Activated CD4-positive, alpha-beta T cell treated with anti-CD3 and anti-CD28 coated beads for 36 hours (primary cell): ENCODE measurements at regions of chr1 and their contacts with region 1.

Region 1: GRCh38 chr1:75724472-75725022 is at the start of gene ACADM:
- DNase-seq: peak; percentile 91
- ATAC-seq: peak; percentile 94
- H3K4me3 Mint-ChIP-seq: peak within 1 kb of the TSS; percentile 98
- H3K27ac Mint-ChIP-seq: peak within 1 kb of the TSS; percentile 98
- H3K4me1 Mint-ChIP-seq: peaks cover 40% of the 10 kb centered on the region
- H3K27me3 Mint-ChIP-seq: no peaks in the 10 kb centered on the region
- total RNA-seq, gene ACADM: 47.2 to 51.8 TPM

Region 2: DNA sequence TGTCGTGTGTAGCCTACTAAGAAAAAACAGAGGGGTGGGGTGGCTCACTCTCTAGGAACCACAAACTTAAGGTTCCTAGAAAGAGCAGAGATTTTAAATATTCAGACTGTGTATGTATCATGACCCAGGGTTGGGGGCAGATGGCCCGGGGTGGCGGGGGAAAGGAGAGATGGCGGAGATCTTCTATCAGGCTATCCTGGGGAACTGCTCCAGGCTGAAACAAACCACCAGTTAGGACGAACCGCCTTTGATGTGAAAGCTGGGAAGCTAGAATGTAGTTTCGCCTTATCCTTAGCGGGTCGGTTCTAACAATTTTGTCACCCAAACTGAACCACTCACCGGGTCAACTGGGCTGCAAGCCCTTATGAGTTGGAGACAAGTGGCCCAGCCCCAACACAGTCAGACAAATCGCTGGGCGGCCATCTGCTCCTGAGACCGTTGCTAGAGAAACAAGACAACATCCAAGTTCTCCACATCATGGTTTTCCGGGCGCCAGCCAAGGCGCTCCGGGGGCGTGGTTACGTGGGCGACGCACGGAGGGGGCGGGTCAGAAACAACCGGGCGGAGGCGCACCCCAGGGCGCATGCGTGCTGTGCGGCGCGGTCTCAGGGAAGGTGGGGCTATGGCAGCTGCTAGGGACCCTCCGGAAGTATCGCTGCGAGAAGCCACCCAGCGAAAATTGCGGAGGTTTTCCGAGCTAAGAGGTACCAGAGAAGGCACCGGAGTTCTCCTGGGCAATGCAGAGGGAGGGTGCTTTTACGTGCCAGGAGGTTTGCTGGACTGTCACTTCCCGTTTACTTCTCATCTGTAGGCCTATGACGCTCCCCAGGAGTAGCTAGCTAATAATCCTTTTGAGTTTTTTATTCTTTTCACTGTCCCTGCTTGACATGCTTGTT is 1526.6 kb before region 1 on chr1 and contains the starts of genes FPGT and LRRIQ3:
- CTCF ChIA-PET with region 1: no interaction called
- POLR2A ChIA-PET with region 1: no interaction called
- intact Hi-C with region 1: loop called in 1 of 2 experiments (anchors 1 kb)
- DNase-seq: peak; percentile 97
- ATAC-seq: peak; percentile 96
- H3K4me3 Mint-ChIP-seq: peak within 1 kb of the TSS; percentile 85
- H3K27ac Mint-ChIP-seq: peak within 1 kb of the TSS; percentile 95
- H3K4me1 Mint-ChIP-seq: peaks cover 15% of the 10 kb centered on the region
- H3K27me3 Mint-ChIP-seq: no peaks in the 10 kb centered on the region
- total RNA-seq, gene FPGT: 12.5 to 13.9 TPM
- total RNA-seq, gene LRRIQ3: 1.9 to 2.7 TPM

Region 3: GRCh38 chr1:74771913-74772515 is 952.5 kb before region 1 on chr1:
- CTCF ChIA-PET with region 1: no interaction called
- POLR2A ChIA-PET with region 1: no interaction called
- intact Hi-C with region 1: loop called in 1 of 2 experiments (anchors 10 kb)
- DNase-seq: peak; percentile 27
- ATAC-seq: no peak
- H3K4me3 Mint-ChIP-seq: no peak overlapping the region
- H3K27ac Mint-ChIP-seq: no peak overlapping the region
- H3K4me1 Mint-ChIP-seq: no peaks in the 10 kb centered on the region
- H3K27me3 Mint-ChIP-seq: peaks cover 9% of the 10 kb centered on the region

Region 4: GRCh38 chr1:76074321-76075187 is 350.0 kb after region 1 on chr1 and contains the start of gene ST6GALNAC3:
- CTCF ChIA-PET with region 1: no interaction called
- POLR2A ChIA-PET with region 1: no interaction called
- intact Hi-C with region 1: loop called in 1 of 2 experiments (anchors 1 kb)
- DNase-seq: peak; percentile 86
- ATAC-seq: peak; percentile 99
- H3K4me3 Mint-ChIP-seq: peak within 1 kb of the TSS; percentile 74
- H3K27ac Mint-ChIP-seq: peak within 1 kb of the TSS; percentile 21
- H3K4me1 Mint-ChIP-seq: peaks cover 23% of the 10 kb centered on the region
- H3K27me3 Mint-ChIP-seq: no peaks in the 10 kb centered on the region
- total RNA-seq, gene ST6GALNAC3: 0.73 to 1.1 TPM